ENCODE measurements at regions of chr11 and their contacts with region 1.

Region 1: GRCh38 chr11:62591448-62592145 is at the start of gene TUT1:
- DNase-seq: peak; percentile 83
- H3K4me3 ChIP-seq: peak within 1 kb of the TSS; percentile 77 to 78
- H3K27ac ChIP-seq: peak within 1 kb of the TSS; percentile 86 to 94
- H3K4me1 ChIP-seq: peaks cover 13 to 17% of the 10 kb centered on the region in 2 experiments; a peak in 3 of 4 replicates
- H3K27me3 ChIP-seq: no peaks in the 10 kb centered on the region
- CTCF ChIP-seq: no peak; the same call in 1 of the 2 replicates
- EP300 ChIP-seq: 0 out of 4 replicates have a peak, but pooled peaks of 1 of the 2 experiments have one; percentile 22
- RAD21 ChIP-seq: no peak
- polyA plus RNA-seq, gene TUT1: 27.3 and 30.0 TPM in 2 replicates

Region 2: DNA sequence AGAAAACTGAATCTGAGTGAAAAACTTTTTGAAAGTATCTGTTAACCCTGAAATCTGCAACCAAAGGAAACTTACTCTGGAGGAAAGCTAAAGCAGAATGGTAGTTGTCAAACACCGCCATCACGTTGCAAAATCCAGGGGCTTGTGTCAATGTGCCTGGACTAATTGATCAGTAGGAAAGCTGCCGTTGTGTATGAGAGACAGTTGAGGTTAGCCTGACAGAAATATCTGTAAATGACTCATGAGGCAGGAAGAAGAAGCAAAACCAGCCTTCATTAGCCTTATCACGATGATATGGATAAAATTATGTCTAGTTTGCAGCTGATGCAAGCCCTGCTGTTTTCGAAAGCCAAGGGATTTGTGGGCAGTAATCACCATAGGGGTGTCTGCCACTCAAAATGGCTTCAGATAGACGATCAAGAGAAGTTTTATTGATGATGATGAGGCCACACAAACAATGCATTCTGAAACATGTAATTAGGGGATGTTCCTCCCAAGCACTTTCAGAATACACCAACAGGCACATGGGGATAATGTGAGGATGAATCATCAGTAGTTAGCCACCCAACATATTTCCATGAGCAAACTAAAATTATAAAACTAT is 163.9 kb before region 1 on chr11:
- CTCF ChIA-PET with region 1: interaction called, 17 read pairs
- POLR2A ChIA-PET with region 1: interaction called, 4 read pairs
- DNase-seq: peak; percentile 47
- H3K4me3 ChIP-seq: no peak overlapping the region
- H3K27ac ChIP-seq: peak overlapping the region; percentile 76 to 77
- H3K4me1 ChIP-seq: peaks cover 18 to 39% of the 10 kb centered on the region in 2 experiments
- H3K27me3 ChIP-seq: no peaks in the 10 kb centered on the region
- CTCF ChIP-seq: no peak
- EP300 ChIP-seq: peak in 1 of 2 experiments; percentile 79; a peak in 2 of 4 replicates
- RAD21 ChIP-seq: peak; percentile 18; the same call in 1 of the 2 replicates

Region 3: DNA sequence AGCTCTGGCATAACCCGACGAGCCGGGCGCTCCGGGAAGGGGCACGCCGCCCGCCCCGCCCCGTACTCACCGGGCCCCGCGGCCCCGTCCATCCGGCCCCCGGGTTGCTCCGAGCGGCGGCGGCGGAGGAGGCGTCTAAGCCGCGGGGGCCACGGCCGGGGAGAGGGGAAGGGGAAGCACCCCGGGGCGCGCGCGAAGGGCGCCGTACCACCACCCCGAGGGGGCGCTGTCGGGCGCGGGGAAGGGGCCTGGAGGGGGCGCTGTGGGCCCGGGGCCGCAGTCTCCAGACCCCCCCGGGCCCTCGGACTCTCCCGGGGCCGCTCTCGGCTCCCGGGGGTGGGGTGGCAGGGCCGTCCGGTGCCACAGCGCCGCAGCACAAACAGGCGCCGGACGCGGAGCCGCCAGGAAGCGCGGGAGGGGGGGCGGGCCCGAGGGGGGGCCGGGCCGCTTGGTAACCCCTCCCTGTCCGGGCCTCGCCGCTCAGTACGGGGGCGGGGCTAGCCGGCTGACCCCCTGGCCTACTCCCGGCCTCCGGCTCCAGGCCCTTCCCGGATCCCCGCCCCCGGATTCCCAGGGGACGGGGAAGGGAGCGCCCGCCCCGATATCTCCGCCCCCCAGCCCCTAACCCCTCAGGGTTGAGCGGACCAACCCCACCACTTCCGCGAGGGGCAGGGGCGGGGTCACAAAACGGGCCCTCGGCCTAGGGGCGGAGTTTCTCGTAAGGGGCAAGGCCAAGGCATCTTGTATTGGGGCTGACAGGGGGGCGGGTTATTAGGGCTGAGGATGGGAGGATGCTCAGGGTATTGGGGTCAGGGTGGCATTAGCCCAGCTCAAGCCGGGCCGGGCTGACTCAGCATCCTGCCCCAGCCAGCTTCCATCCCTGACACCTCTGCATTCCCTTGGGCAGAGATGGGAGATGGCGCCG is 21.0 kb after region 1 on chr11 and contains the starts of genes EML3 and ROM1:
- CTCF ChIA-PET with region 1: interaction called, 69 read pairs
- POLR2A ChIA-PET with region 1: interaction called, 18 read pairs
- DNase-seq: peak; percentile 97
- H3K4me3 ChIP-seq: peak within 1 kb of the TSS; percentile 71 to 81
- H3K27ac ChIP-seq: peak within 1 kb of the TSS; percentile 70 to 92
- H3K4me1 ChIP-seq: peaks cover 4 to 24% of the 10 kb centered on the region in 2 experiments; a peak in 2 of 4 replicates
- H3K27me3 ChIP-seq: no peaks in the 10 kb centered on the region
- CTCF ChIP-seq: peak; percentile 76
- EP300 ChIP-seq: no peak
- RAD21 ChIP-seq: no peak; the same call in 1 of the 2 replicates
- polyA plus RNA-seq, gene EML3: 43.0 and 47.8 TPM in 2 replicates
- polyA plus RNA-seq, gene ROM1: 7.3 and 7.9 TPM in 2 replicates

Region 4: DNA sequence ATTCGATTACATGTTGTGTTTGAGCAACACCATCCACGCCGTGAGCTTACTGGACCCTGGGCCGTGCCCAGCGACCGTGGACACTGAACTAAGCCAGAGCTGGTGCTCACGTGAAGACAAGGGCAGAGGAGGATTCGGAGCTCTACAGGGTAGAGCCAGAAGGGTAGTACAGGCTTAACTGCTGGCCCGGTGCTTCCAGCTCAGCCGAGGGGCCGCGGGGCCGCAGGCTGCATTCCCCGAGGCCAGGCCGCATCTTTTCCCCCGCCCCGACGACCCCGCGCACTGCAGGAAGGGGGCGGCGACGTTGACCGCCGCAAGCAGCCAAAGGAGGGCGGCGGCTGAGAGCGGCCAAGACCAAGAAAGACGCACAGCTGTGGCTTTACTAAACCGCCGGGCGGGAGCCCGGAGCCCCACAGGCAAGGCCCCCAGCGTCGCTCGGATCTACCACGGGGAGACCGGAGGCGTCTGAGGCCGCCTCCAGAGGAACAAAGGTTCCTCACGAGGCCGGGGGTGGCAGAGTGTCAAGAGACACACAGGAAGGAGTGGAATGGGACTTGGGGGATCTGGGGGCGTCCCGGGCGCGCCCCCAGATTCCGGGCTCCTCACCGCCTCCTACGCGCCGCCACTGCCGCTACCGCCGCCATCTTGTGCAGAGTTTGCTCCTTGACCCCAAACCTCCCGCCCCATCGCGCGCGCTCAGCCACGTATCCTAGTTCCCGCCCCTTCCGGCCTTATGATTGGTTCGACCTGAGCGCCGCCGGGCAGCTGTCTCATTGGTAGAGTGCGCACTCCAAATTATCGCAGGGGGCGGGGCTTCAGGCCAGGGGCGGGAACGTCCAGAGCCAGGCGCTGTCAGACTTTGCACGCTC is 54.6 kb after region 1 on chr11 and contains the start of gene GANAB:
- CTCF ChIA-PET with region 1: interaction called, 10 read pairs
- POLR2A ChIA-PET with region 1: interaction called, 11 read pairs
- DNase-seq: peak; percentile 99
- H3K4me3 ChIP-seq: peak within 1 kb of the TSS; percentile 78 to 87
- H3K27ac ChIP-seq: peak within 1 kb of the TSS; percentile 77 to 88
- H3K4me1 ChIP-seq: peaks cover 5 to 8% of the 10 kb centered on the region in 2 experiments; a peak in 2 of 4 replicates
- H3K27me3 ChIP-seq: no peaks in the 10 kb centered on the region
- CTCF ChIP-seq: no peak
- EP300 ChIP-seq: no peak; a peak in 1 of 4 replicates
- RAD21 ChIP-seq: no peak
- polyA plus RNA-seq, gene GANAB: 275 and 332 TPM in 2 replicates

Region 5: GRCh38 chr11:62671575-62672389 is 80.2 kb after region 1 on chr11 and contains the starts of genes LBHD1 and UQCC3:
- CTCF ChIA-PET with region 1: no interaction called
- POLR2A ChIA-PET with region 1: interaction called, 16 read pairs
- DNase-seq: peak; percentile 88
- H3K4me3 ChIP-seq: peak within 1 kb of the TSS; percentile 68 to 90
- H3K27ac ChIP-seq: peak within 1 kb of the TSS; percentile 80 to 94
- H3K4me1 ChIP-seq: peaks cover 21 to 22% of the 10 kb centered on the region in 2 experiments; a peak in 3 of 4 replicates
- H3K27me3 ChIP-seq: no peaks in the 10 kb centered on the region
- CTCF ChIP-seq: no peak
- EP300 ChIP-seq: no peak
- RAD21 ChIP-seq: no peak
- polyA plus RNA-seq, gene LBHD1: 9.7 and 12.0 TPM in 2 replicates
- polyA plus RNA-seq, gene UQCC3: 22.7 and 24.8 TPM in 2 replicates